ENCODE measurements at regions of chr10 and their contacts with region 1.

Region 1: DNA sequence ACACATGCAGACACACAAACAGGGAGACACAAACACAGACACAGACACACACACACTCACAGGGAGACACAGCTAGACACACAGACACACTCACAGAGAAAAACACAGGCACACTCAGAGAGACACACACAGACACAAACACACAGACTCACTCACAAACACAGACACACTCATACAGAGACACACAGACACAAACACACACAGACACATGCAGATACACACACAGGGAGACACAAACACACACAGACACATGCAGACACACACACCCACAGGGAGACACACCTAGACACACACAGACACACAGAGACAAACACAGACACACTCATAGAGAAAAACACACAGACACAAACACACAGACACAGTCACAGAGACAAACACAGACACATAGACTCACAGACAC is 67.9 kb downstream of the ADARB2 start:
- DNase-seq: no peak
- H3K4me3 ChIP-seq: no peak overlapping the region
- H3K27ac ChIP-seq: no peak overlapping the region
- H3K4me1 ChIP-seq: no peaks in the 10 kb centered on the region
- H3K27me3 ChIP-seq: peaks cover 0 to 8% of the 10 kb centered on the region in 2 donors
- CTCF ChIP-seq: no peak
- POLR2A ChIP-seq: no peak

Region 2: DNA sequence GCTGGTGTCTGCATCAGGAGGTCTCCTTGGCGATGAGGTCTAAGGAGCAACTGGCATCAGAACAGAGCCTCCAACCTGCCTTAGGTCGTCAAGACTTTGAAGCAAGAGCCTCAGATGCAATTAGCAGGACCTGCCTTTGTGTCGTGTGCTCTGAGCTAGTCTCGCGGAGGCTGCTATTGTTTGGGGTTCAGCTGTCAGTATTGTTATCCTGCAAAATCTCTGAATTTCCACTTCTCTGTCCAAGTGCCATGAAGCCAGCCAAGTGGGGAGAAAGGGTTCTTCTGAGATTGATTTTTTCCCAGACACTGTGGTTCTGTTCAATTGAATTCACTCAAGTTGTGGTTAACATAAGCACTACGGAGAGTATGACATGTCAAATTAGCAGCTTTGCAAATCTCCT is 10.8 kb before region 1 on chr10:
- intact Hi-C with region 1: loop called (anchors 1 kb)
- DNase-seq: no peak
- H3K4me3 ChIP-seq: no peak overlapping the region
- H3K27ac ChIP-seq: no peak overlapping the region
- H3K4me1 ChIP-seq: no peaks in the 10 kb centered on the region
- H3K27me3 ChIP-seq: peaks cover 0 to 23% of the 10 kb centered on the region in 2 donors
- CTCF ChIP-seq: no peak
- POLR2A ChIP-seq: no peak